AG04450 (cell line): ENCODE measurements at regions of chr6 and their contacts with region 1.

Region 1: DNA sequence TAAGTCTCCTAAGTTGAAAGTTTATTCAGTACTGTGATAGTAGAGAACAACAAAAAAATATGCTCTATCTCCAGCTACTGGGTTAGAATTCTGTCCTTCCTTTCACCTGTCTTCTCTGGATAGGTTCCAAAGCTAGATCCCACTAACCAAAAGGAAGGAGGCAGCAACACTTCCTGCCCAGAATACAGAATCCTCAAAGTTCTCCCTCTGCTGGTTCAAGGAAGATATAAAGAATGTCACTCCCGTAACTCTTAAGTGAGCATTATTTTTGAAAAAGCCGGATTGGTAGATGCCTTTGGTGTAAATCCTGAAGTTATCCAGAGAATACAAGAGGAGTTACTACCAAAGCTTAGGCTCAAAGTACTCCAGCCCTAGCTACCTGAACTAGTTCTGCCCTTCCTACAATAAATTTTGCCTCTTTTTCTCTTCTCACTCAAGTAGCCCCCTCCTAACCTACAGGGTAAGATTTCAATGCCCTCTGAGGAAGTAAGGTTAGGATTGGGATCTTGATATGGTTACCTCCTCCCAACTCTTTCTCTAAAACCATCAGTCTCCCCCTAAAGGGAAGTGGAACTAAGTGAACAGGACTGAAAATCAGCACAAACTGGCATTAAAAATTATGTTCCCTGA is 26.0 kb upstream of the CRIP3 start:
- DNase-seq: peak; percentile 13
- H3K4me3 ChIP-seq: no peak overlapping the region
- H3K27ac ChIP-seq: no peak overlapping the region
- H3K27me3 ChIP-seq: no peaks in the 10 kb centered on the region
- CTCF ChIP-seq: peak; percentile 71

Region 2: GRCh38 chr6:43263314-43264178 is 71.0 kb before region 1 on chr6:
- CTCF ChIA-PET with region 1: interaction called, 47 read pairs
- POLR2A ChIA-PET with region 1: no interaction called
- DNase-seq: peak; percentile 15
- H3K4me3 ChIP-seq: no peak overlapping the region
- H3K27ac ChIP-seq: no peak overlapping the region
- H3K27me3 ChIP-seq: peaks cover 22% of the 10 kb centered on the region
- CTCF ChIP-seq: peak; percentile 76

Region 3: DNA sequence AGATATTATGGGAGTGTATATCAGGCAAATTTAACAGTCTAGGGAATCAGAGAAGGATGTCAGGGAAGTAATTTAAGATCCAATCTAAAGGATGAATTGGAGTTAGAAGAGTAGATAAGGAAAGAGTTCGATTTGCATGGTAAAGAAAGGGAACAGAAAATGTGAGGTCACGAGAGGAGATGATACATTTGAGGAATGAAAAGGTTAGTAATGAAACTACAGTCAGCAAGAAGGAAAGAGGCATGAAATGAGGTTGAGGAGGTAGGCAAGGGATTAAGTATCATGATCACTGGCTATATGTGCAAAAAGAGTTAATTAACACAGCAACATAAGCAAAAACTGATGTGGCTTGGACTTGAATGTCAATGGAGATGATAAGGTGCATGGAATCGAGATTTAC is 12.4 kb after region 1 on chr6:
- CTCF ChIA-PET with region 1: interaction called, 24 read pairs
- POLR2A ChIA-PET with region 1: no interaction called
- DNase-seq: no peak
- H3K4me3 ChIP-seq: no peak overlapping the region
- H3K27ac ChIP-seq: no peak overlapping the region
- H3K27me3 ChIP-seq: no peaks in the 10 kb centered on the region
- CTCF ChIP-seq: no peak